HepG2 (cell line): ENCODE measurements at regions of chr2 and their contacts with region 1.

Region 1: DNA sequence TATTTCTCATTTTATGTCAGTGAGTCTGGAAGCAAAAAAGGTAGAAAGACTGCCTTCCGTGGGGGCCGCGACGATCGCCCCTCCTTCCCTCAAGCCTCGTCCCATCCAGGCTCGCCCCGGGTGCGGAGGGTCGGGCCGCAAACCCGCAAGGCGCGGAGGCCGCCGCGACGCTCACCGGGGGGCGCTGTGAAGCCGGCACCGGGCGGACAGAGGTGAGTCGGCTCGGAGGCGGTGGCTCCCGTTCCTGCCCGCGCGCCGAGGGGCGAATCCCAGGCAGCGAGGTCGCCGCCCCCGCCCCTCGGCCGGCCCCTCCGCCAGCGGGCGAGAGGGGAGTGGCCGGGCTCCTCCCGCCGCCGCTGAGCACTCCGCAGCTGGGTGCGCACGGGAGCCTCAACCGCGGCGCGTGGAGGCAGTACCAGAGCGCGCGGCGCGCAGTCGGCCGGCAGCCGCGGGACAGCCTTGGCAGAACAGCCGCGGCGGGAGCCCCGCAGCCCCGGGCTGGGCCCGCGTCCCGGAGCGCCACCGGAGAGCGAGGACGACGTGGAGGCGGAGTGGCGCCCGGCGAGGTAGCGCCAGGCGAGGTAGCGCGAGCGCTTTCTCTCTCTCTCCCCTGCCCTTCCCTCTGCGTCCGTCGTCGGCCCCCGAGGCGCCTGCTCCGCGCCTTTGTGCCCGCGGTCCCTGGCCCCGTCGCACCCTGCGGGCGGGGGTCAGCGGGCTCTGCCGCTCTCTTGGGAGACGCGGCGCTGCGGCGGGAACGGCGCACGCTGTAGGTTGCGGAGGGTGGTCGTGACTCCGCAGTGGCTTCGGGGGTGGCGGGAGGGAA is at the start of gene MYO1B:
- DNase-seq: peak; percentile 81
- ATAC-seq: peak; percentile 87
- H3K4me3 ChIP-seq: peak within 1 kb of the TSS; percentile 80 to 89 (median 85)
- H3K27ac ChIP-seq: peak within 1 kb of the TSS; percentile 86
- H3K4me1 ChIP-seq: peaks cover 56% of the 10 kb centered on the region
- H3K27me3 ChIP-seq: no peaks in the 10 kb centered on the region; a peak in 1 of 5 replicates
- CTCF ChIP-seq: peak; percentile 96
- EP300 ChIP-seq: peak in 1 of 2 experiments; percentile 42; a peak in 1 of 4 replicates
- POLR2A ChIP-seq: peak; percentile 87 to 91; a peak in 3 of 4 replicates
- RAD21 ChIP-seq: peak; percentile 99
- total RNA-seq, gene MYO1B: 89.8 and 134 TPM in 2 replicates

Region 2: GRCh38 chr2:191302459-191303139 is 57.3 kb after region 1 on chr2:
- CTCF ChIA-PET with region 1: interaction called, 18 read pairs
- POLR2A ChIA-PET with region 1: interaction called, 11 read pairs
- in situ Hi-C with region 1: no loop called
- intact Hi-C with region 1: loop called (anchors 1 kb)
- DNase-seq: peak; percentile 58
- ATAC-seq: peak; percentile 96
- H3K4me3 ChIP-seq: no peak overlapping the region
- H3K27ac ChIP-seq: no peak overlapping the region
- H3K4me1 ChIP-seq: peaks cover 18% of the 10 kb centered on the region
- H3K27me3 ChIP-seq: no peaks in the 10 kb centered on the region
- CTCF ChIP-seq: peak; percentile 64
- EP300 ChIP-seq: no peak
- POLR2A ChIP-seq: no peak
- RAD21 ChIP-seq: peak; percentile 58

Region 3: DNA sequence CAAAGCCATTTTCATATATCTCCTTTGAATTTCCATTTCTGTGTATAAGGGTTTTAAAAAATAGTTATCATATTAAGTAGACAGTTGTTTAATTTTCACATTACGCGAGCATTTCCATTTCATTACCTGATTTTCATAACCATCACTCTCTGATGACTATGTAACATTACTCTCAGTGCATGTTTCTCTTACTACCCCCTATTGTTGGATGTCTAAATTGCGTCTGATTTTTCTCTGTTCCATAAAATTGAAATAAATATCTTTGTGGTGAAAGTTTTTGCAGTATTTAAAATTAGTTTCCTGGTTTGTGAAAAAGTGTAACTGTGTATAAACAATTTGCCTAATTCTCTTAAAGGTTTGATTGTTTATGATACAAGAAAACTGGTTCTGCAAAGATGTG is 123.8 kb after region 1 on chr2:
- CTCF ChIA-PET with region 1: interaction called, 4 read pairs
- POLR2A ChIA-PET with region 1: no interaction called
- in situ Hi-C with region 1: no loop called
- intact Hi-C with region 1: loop called (anchors 2 kb)
- DNase-seq: no peak
- ATAC-seq: peak; percentile 47; the same call in 1 of the 3 replicates
- H3K4me3 ChIP-seq: no peak overlapping the region
- H3K27ac ChIP-seq: no peak overlapping the region
- H3K4me1 ChIP-seq: no peaks in the 10 kb centered on the region
- H3K27me3 ChIP-seq: no peaks in the 10 kb centered on the region
- CTCF ChIP-seq: 0 out of 2 replicates have a peak, but pooled peaks have one; percentile 7
- EP300 ChIP-seq: no peak
- POLR2A ChIP-seq: no peak
- RAD21 ChIP-seq: no peak

Region 4: GRCh38 chr2:191382801-191383200 is 137.5 kb after region 1 on chr2:
- CTCF ChIA-PET with region 1: no interaction called
- POLR2A ChIA-PET with region 1: interaction called, 3 read pairs
- in situ Hi-C with region 1: loop called (anchors 10 kb)
- intact Hi-C with region 1: no loop called
- DNase-seq: peak; percentile 87
- ATAC-seq: peak; percentile 83
- H3K4me3 ChIP-seq: no peak overlapping the region
- H3K27ac ChIP-seq: peak overlapping the region; percentile 42
- H3K4me1 ChIP-seq: peaks cover 43% of the 10 kb centered on the region
- H3K27me3 ChIP-seq: no peaks in the 10 kb centered on the region
- CTCF ChIP-seq: no peak
- EP300 ChIP-seq: peak in 1 of 2 experiments; percentile 83; a peak in 2 of 4 replicates
- POLR2A ChIP-seq: no peak
- RAD21 ChIP-seq: no peak